ENCODE measurements at regions of chr1 and their contacts with region 1.

Region 1: GRCh38 chr1:17207966-17208418 is 3.1 kb downstream of the PADI1 start:
- H3K4me3 ChIP-seq: no peak overlapping the region
- H3K27ac ChIP-seq: no peak overlapping the region
- H3K4me1 ChIP-seq: peaks cover 4% of the 10 kb centered on the region
- CTCF ChIP-seq: no peak

Region 2: DNA sequence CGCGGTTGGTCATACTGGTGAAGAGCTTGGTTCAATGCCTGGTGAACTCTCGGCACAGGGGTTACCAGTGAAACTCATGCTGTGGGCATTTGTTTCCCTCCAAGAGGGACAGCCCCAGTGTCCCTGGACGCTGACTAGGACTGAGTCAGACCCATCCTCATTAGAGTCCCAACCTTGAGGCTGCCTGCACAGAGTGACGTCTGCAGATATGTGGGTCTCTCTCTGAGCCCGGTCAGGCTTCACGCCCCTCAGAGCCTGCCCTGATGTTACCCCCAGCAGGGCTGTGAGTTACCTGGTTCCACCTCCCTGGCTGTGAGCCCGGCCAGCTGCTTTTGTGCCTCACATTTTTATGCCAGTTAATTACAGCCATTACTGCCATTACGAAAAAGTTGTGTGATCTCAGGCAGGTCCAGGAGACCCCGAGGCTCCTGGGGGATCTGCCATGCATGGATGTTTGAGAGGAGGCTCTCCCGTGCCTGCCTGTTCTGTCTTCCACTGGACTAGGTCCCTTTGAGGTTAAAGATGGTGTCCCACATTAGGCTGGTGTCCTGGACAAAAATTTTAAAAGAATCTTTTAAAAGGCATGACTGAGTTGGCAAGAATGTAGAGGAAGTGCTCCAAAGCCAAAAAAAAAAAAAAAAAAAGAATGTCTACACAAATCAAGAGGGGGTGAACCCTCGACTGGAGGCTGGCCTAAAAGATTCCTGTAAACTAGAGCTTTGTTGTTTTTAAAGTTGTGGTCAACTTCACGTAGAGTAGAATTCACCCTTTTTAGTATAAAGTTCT is 39.7 kb before region 1 on chr1:
- CTCF ChIA-PET with region 1: no interaction called
- POLR2A ChIA-PET with region 1: no interaction called
- H3K4me3 ChIP-seq: no peak overlapping the region
- H3K27ac ChIP-seq: no peak overlapping the region
- H3K4me1 ChIP-seq: no peaks in the 10 kb centered on the region
- CTCF ChIP-seq: no peak

Region 3: GRCh38 chr1:17186216-17186909 is 21.6 kb before region 1 on chr1:
- CTCF ChIA-PET with region 1: no interaction called
- POLR2A ChIA-PET with region 1: interaction called, 11 read pairs
- H3K4me3 ChIP-seq: no peak overlapping the region
- H3K27ac ChIP-seq: no peak overlapping the region
- H3K4me1 ChIP-seq: no peaks in the 10 kb centered on the region
- CTCF ChIP-seq: no peak

Measured in HEK293 (cell line).